ENCODE measurements at regions of chr10 and their contacts with region 1.

Region 1: GRCh38 chr10:17109475-17110207 is 20.0 kb downstream of the CUBN start:
- DNase-seq: no peak
- H3K4me3 ChIP-seq: no peak overlapping the region
- H3K27ac ChIP-seq: no peak overlapping the region
- H3K4me1 ChIP-seq: no peaks in the 10 kb centered on the region
- H3K27me3 ChIP-seq: no peaks in the 10 kb centered on the region
- CTCF ChIP-seq: no peak

Region 2: GRCh38 chr10:16954280-16955030 is 155.2 kb before region 1 on chr10:
- intact Hi-C with region 1: no loop called
- DNase-seq: no peak
- H3K4me3 ChIP-seq: no peak overlapping the region
- H3K27ac ChIP-seq: no peak overlapping the region
- H3K4me1 ChIP-seq: no peaks in the 10 kb centered on the region
- H3K27me3 ChIP-seq: no peaks in the 10 kb centered on the region
- CTCF ChIP-seq: no peak

Region 3: GRCh38 chr10:17144757-17145156 is 35.1 kb after region 1 on chr10:
- intact Hi-C with region 1: loop called (anchors 5 kb)
- DNase-seq: no peak
- H3K4me3 ChIP-seq: no peak overlapping the region
- H3K27ac ChIP-seq: no peak overlapping the region
- H3K4me1 ChIP-seq: peaks cover 3 to 25% of the 10 kb centered on the region in 2 donors
- H3K27me3 ChIP-seq: no peaks in the 10 kb centered on the region
- CTCF ChIP-seq: no peak